GM13977 (cell line): ENCODE measurements at regions of chr20 and their contacts with region 1.

Region 1: GRCh38 chr20:46520976-46521579 is 7.7 kb upstream of the ZNF334 start:
- DNase-seq: peak; percentile 65
- CTCF ChIP-seq: peak; percentile 85

Region 2: DNA sequence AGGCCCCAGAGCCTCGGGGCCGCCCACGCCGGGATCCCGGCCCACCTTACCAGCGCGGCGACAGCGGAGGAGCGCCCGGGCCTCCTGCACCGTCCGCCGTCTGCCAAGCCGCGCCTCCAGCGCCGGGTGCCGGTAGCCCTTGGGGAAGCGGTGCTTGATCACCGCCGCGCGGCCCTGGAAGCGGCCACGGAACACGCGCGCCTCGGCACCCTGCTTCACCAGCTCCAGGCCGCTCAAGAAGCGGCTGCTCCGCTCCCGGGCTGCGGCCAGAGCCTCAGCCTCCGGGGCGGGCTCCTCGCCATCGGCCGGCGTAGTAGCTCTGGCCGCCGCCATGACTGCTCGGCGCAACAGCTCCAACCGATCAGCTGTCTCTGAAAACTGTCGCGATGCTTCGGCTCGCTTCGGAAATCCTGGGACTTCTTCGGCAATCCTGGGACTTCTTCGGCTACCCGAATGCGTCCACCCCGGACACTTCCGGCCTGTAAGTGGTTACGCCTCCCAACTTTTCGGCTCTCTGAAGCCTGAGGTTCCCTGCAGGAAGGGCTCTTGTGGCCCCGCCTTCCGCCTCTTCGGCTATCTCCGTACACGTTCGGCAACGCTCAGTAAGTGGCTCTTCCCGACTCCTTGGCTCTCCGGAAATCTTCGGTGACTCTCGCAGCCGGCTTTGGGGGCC is 168.1 kb after region 1 on chr20 and contains the start of gene TP53RK:
- in situ Hi-C with region 1: loop called (anchors 10 kb)
- DNase-seq: peak; percentile 99
- CTCF ChIP-seq: no peak